ENCODE measurements at regions of chr16 and their contacts with region 1.

Region 1: DNA sequence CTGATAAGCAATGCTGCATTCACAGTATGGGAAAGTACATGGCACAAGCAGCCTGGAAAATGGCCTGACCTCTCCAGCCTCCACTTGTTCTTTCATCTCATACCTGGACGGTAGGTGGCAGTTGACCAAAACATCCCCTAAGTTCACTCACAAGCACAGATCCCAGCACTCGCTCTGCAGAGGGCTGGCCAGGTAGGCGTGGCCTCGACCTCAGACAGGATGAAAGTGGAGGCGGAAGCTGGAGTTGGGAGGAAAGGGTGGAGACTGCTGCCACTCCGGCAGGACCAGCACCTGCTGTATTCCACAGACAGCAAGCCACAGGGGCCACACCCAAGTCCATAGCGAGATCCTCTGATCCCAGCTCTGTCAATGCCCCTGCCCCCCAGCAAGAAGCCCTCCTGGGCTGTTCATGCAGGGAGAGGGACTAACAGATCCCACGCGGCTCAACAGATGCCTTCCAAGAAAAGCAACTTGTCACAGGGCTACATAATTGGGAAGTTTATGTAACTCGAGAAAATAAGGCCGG is 31.3 kb downstream of the ZCCHC14 start:
- DNase-seq: peak; percentile 96 to 98
- H3K4me3 ChIP-seq: peak overlapping the region; percentile 23; the same call in 1 of the 2 replicates
- H3K4me3 Mint-ChIP-seq: peak overlapping the region; percentile 59
- H3K27ac Mint-ChIP-seq: no peak overlapping the region
- H3K4me1 ChIP-seq: peaks cover 14% of the 10 kb centered on the region; the same call in 1 of the 2 replicates
- H3K4me1 Mint-ChIP-seq: peaks cover 7% of the 10 kb centered on the region
- H3K27me3 ChIP-seq: no peaks in the 10 kb centered on the region
- H3K27me3 Mint-ChIP-seq: no peaks in the 10 kb centered on the region
- CTCF ChIP-seq: peak; percentile 77 to 85

Region 2: GRCh38 chr16:87492721-87493607 is 31.4 kb after region 1 on chr16 and contains the start of gene ZCCHC14:
- CTCF ChIA-PET with region 1: interaction called, 7 read pairs
- POLR2A ChIA-PET with region 1: no interaction called
- intact Hi-C with region 1: loop called (anchors 2 kb)
- DNase-seq: peak; percentile 99 to 100
- H3K4me3 ChIP-seq: peak within 1 kb of the TSS; percentile 65
- H3K4me3 Mint-ChIP-seq: peak within 1 kb of the TSS; percentile 98
- H3K27ac Mint-ChIP-seq: peak within 1 kb of the TSS; percentile 92
- H3K4me1 ChIP-seq: 0 out of 2 replicates have a peak, but pooled peaks cover 4% of the 10 kb centered on the region
- H3K4me1 Mint-ChIP-seq: peaks cover 29% of the 10 kb centered on the region
- H3K27me3 ChIP-seq: no peaks in the 10 kb centered on the region
- H3K27me3 Mint-ChIP-seq: no peaks in the 10 kb centered on the region
- CTCF ChIP-seq: no peak
- total RNA-seq, gene ZCCHC14: 33.1 and 34.0 TPM in 2 replicates

Region 3: GRCh38 chr16:87543436-87544191 is 82.1 kb after region 1 on chr16:
- CTCF ChIA-PET with region 1: interaction called, 4 read pairs
- POLR2A ChIA-PET with region 1: no interaction called
- intact Hi-C with region 1: loop called (anchors 2 kb)
- DNase-seq: no peak
- H3K4me3 ChIP-seq: no peak overlapping the region
- H3K4me3 Mint-ChIP-seq: no peak overlapping the region
- H3K27ac Mint-ChIP-seq: no peak overlapping the region
- H3K4me1 ChIP-seq: peaks cover 3% of the 10 kb centered on the region; the same call in 1 of the 2 replicates
- H3K4me1 Mint-ChIP-seq: no peaks in the 10 kb centered on the region
- H3K27me3 ChIP-seq: no peaks in the 10 kb centered on the region
- H3K27me3 Mint-ChIP-seq: no peaks in the 10 kb centered on the region
- CTCF ChIP-seq: no peak

Region 4: GRCh38 chr16:87571136-87571867 is 109.8 kb after region 1 on chr16:
- CTCF ChIA-PET with region 1: interaction called, 31 read pairs
- POLR2A ChIA-PET with region 1: no interaction called
- intact Hi-C with region 1: loop called (anchors 1 kb)
- DNase-seq: peak; percentile 80 to 83
- H3K4me3 ChIP-seq: no peak overlapping the region
- H3K4me3 Mint-ChIP-seq: peak overlapping the region; percentile 19
- H3K27ac Mint-ChIP-seq: no peak overlapping the region
- H3K4me1 ChIP-seq: peaks cover 9% of the 10 kb centered on the region; the same call in 1 of the 2 replicates
- H3K4me1 Mint-ChIP-seq: no peaks in the 10 kb centered on the region
- H3K27me3 ChIP-seq: no peaks in the 10 kb centered on the region
- H3K27me3 Mint-ChIP-seq: no peaks in the 10 kb centered on the region
- CTCF ChIP-seq: peak; percentile 44 to 85